Tibial artery (tissue), 4 donors: ENCODE measurements at regions of chr19 and their contacts with region 1.

Region 1: GRCh38 chr19:52823676-52824075 is 2.2 kb upstream of the ZNF28 start:
- DNase-seq: no peak
- H3K4me3 ChIP-seq: no peak overlapping the region
- H3K27ac ChIP-seq: no peak overlapping the region
- H3K4me1 ChIP-seq: peaks cover 0 to 8% (median 5%) of the 10 kb centered on the region in 4 donors
- H3K27me3 ChIP-seq: no peaks in the 10 kb centered on the region
- CTCF ChIP-seq: no peak

Region 2: GRCh38 chr19:52853880-52854279 is 30.2 kb after region 1 on chr19:
- intact Hi-C with region 1: loop called (anchors 5 kb)
- DNase-seq: no peak
- H3K4me3 ChIP-seq: no peak overlapping the region
- H3K27ac ChIP-seq: no peak overlapping the region
- H3K4me1 ChIP-seq: peaks cover 0 to 12% (median 2%) of the 10 kb centered on the region in 4 donors
- H3K27me3 ChIP-seq: no peaks in the 10 kb centered on the region
- CTCF ChIP-seq: no peak